Activated CD8-positive, alpha-beta T cell treated with anti-CD3 and anti-CD28 coated beads, Interleukin-2, amount 10 ng/mL, durations not matched to agents 7 days and 5 days (primary cell): ENCODE measurements at regions of chr9 and their contacts with region 1.

Region 1: GRCh38 chr9:15873569-15874177 is 320.8 kb downstream of the CCDC171 start:
- DNase-seq: no peak
- ATAC-seq: no peak
- H3K4me3 Mint-ChIP-seq: no peak overlapping the region
- H3K27ac Mint-ChIP-seq: no peak overlapping the region
- H3K4me1 Mint-ChIP-seq: no peaks in the 10 kb centered on the region
- H3K27me3 Mint-ChIP-seq: no peaks in the 10 kb centered on the region

Region 2: DNA sequence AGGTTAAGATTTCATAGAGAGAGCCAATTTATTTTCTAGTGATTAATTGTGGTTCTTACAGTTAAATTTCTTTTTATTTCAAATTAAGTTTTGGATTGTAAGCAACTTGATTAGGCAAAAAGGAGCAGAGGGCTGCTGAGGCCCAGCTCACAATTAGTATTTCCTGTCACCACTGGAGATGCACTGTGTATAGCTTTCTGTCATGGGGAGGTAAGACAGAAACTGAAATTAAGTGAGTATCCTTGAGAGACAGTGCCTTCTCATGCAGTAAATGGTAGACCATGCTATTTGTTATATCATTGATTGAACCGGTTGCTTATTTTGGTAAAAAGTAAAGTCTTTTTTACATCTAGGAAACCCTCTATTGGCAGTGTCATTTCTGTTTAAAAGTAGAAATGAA is 130.2 kb before region 1 on chr9:
- CTCF ChIA-PET with region 1: no interaction called
- POLR2A ChIA-PET with region 1: no interaction called
- DNase-seq: no peak
- ATAC-seq: no peak
- H3K4me3 Mint-ChIP-seq: no peak overlapping the region
- H3K27ac Mint-ChIP-seq: no peak overlapping the region
- H3K4me1 Mint-ChIP-seq: no peaks in the 10 kb centered on the region
- H3K27me3 Mint-ChIP-seq: no peaks in the 10 kb centered on the region

Region 3: DNA sequence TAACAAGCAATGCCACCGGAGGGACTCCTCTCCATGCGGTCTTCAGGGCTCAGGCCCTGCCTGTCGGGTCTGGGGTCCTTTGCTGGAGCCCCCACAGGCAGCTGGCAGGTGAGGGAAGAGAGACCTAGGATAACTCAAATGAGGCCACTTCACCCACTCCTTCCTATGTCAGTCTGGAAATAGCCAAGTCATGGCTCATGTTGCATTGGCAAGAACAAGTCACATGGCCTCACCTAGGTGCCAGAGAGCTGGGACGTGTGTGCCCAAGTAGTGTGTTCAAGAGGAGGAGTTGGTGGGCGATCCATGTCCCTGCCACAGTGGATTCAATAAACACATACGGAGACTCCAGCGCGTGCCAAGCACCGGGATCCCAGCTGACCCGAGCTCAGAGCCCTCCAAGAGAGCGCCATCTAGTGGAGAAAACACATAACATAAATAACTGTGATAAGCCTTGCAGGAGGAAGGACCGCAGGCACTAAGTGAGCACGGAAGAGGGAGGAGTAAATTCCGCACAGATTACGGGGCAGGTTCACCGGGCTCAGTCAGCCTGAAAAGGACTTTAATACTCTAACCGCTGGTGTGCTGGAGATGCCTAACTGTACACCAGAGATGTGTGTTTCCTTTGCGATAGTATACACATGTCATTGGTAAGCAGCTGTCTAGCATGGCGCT is 260.0 kb after region 1 on chr9:
- CTCF ChIA-PET with region 1: interaction called, 10 read pairs
- POLR2A ChIA-PET with region 1: no interaction called
- DNase-seq: peak; percentile 46
- ATAC-seq: peak; percentile 93
- H3K4me3 Mint-ChIP-seq: no peak overlapping the region
- H3K27ac Mint-ChIP-seq: no peak overlapping the region
- H3K4me1 Mint-ChIP-seq: no peaks in the 10 kb centered on the region
- H3K27me3 Mint-ChIP-seq: peaks cover 2% of the 10 kb centered on the region